Ascending aorta (tissue), 2 donors: ENCODE measurements at regions of chr20 and their contacts with region 1.

Region 1: GRCh38 chr20:58179432-58180099 is 48.9 kb downstream of the ANKRD60 start:
- DNase-seq: peak in 1 of 2 donors; percentile 74
- H3K4me3 ChIP-seq: peak overlapping the region; percentile 46 to 61
- H3K27ac ChIP-seq: no peak overlapping the region
- H3K4me1 ChIP-seq: peaks cover 4 to 21% of the 10 kb centered on the region in 2 donors
- H3K27me3 ChIP-seq: no peaks in the 10 kb centered on the region
- CTCF ChIP-seq: peak; percentile 97 to 100 (median 99)

Region 2: GRCh38 chr20:57654363-57654997 is 525.1 kb before region 1 on chr20:
- intact Hi-C with region 1: loop called (anchors 1 kb)
- DNase-seq: peak in 1 of 2 donors; percentile 68
- H3K4me3 ChIP-seq: no peak overlapping the region
- H3K27ac ChIP-seq: peak overlapping the region; percentile 13 to 40
- H3K4me1 ChIP-seq: peaks cover 0 to 19% of the 10 kb centered on the region in 2 donors
- H3K27me3 ChIP-seq: no peaks in the 10 kb centered on the region
- CTCF ChIP-seq: peak; percentile 81 to 92 (median 89)

Region 3: DNA sequence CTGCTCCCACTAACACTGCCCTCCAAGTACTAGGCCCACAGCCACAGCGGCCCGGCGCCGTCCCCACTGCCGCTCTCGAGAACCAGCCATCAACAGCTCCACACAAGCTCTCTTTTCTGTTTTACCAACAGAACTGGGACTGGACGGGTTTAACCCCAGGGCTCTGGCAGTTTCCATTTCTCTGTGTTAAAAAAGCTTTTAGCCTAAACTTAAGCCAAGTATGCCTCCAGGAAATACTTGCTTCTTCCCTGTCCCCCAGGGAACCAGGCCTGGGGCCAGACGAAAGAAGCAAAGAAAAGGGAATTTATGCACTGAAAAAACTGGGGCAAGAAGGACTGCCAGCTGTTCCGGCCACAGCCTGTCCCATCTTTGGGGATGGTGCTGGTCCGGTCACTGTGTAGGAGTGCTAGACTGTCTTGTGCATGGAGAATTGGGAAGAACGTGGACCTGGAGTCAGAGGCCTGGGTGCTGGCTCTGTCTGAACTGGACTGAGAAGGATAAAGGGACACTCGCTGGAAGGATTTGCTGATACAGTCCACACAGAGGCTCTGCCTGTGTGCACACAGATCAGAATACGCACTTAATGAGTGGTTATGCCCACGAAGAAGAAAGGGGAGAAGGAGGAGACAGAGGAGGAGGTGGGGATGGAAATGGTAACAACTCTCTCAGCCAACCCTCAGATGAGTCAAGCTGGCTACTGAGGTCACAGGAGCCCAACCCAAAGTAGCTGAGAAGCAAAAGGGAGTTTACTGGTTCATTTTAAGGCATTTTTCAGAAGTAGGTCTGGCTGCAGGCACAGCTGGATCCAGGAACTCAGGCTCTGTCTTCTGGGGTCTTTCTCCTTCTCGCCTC is 215.3 kb before region 1 on chr20:
- intact Hi-C with region 1: loop called (anchors 5 kb)
- DNase-seq: peak in 1 of 2 donors; percentile 71
- H3K4me3 ChIP-seq: peak overlapping the region in 1 of 2 donors; percentile 23
- H3K27ac ChIP-seq: peak overlapping the region; percentile 86 to 87
- H3K4me1 ChIP-seq: peaks cover 2 to 38% of the 10 kb centered on the region in 2 donors
- H3K27me3 ChIP-seq: no peaks in the 10 kb centered on the region
- CTCF ChIP-seq: no peak

Region 4: DNA sequence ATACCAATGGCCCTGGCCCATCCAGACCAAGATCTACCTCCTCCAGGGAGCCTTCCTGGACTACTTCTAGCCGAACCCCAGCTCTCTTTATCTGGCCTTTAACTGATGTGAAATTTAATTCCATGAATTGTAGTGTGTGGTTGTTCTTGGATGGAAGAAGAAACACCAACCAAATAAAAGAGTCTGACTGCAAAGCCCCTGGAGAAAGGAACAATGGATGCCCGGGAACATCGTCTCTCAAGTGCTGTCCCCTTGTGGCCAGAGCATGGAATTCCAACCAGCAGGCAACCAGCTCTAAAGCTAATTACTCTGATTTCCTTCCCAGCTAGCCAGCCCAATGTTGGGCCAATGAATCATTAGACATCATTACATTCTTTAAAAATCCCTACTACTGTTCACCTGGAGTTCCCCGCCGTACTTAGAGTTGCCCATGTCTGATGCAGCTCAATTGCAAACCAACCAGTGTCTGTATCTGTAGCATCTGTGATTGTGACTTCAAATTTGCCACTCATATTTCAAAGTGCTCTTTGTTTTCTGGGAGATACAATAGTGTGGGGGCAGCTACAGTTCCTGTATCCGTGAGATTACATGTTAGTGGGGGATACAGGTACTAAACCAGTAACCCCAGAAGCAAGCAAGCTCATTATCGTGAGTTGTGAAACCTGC is 92.2 kb before region 1 on chr20:
- intact Hi-C with region 1: loop called (anchors 2 kb)
- DNase-seq: peak in 1 of 2 donors; percentile 52
- H3K4me3 ChIP-seq: no peak overlapping the region
- H3K27ac ChIP-seq: no peak overlapping the region
- H3K4me1 ChIP-seq: no peaks in the 10 kb centered on the region
- H3K27me3 ChIP-seq: no peaks in the 10 kb centered on the region
- CTCF ChIP-seq: peak; percentile 75 to 85 (median 75)

Region 5: DNA sequence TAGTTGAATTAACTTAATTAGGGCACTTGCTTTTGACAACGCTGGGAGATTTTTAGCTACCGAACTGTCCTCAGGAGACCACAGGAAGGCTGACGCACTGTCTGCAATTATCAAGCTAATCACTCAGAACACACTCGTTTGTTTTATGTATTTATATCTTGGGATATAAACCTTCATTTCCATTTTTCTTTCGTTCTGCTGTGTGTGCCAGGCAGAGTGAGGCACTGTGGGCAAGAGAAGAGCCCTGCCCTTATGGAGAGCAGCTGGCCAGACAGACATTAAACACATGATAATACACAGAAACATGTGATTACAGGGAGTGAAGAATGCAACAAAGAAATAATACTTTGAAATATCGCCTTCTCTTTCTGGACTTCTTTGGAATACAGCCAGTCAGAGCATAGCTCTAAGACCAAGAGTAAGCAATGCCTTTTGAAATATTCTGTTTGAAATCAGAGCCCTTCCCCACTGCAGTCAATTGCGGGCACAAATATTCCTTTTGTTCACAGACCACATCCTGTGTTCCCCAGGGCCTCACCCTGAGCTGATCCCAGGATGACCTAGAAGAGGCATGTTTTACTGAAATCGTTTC is 47.9 kb before region 1 on chr20:
- intact Hi-C with region 1: loop called (anchors 5 kb)
- DNase-seq: no peak
- H3K4me3 ChIP-seq: peak overlapping the region in 1 of 2 donors; percentile 13
- H3K27ac ChIP-seq: peak overlapping the region; percentile 77 to 89
- H3K4me1 ChIP-seq: peaks cover 14 to 68% of the 10 kb centered on the region in 2 donors
- H3K27me3 ChIP-seq: no peaks in the 10 kb centered on the region
- CTCF ChIP-seq: no peak

Region 6: DNA sequence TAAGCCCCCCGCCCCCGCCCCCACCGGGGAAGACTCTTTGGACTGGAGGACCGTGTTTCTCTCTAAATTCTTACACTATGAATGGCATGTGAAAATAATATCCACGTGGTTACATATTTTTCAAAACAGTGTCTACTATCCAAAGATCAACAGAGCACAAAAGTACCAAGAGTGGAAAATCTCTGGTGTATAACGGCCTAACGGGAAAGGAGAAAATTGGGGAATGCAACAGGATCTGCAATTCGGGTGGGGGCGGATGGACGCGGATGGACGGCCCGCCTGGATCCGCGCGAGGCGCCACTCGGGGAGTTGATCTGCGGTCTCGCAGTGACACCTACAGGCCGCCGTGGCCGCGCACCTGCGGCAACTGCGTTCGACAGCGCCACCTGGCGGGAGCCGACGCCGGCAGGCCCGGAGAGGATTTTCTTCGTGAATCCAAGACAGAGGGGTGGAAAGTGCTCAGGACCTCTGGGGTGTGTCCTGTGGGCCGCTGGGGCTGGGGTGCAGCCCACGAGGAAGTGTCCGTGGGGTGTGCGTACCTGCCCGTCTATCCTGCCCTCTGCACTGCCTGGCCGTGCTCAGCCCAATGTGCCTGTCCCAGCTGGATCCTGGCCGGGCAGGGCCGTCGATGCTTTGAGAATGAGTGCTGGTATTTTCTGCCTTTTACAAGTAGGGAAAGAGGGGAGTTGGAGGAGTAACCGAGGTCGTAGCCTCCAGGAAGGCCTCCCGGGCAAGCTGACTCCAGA is 30.3 kb after region 1 on chr20:
- intact Hi-C with region 1: loop called (anchors 1 kb)
- DNase-seq: peak in 1 of 2 donors; percentile 88
- H3K4me3 ChIP-seq: no peak overlapping the region
- H3K27ac ChIP-seq: no peak overlapping the region
- H3K4me1 ChIP-seq: no peaks in the 10 kb centered on the region
- H3K27me3 ChIP-seq: no peaks in the 10 kb centered on the region
- CTCF ChIP-seq: peak; percentile 100